Mammary epithelial cell (primary cell): ENCODE measurements at regions of chr3 and their contacts with region 1.

Region 1: DNA sequence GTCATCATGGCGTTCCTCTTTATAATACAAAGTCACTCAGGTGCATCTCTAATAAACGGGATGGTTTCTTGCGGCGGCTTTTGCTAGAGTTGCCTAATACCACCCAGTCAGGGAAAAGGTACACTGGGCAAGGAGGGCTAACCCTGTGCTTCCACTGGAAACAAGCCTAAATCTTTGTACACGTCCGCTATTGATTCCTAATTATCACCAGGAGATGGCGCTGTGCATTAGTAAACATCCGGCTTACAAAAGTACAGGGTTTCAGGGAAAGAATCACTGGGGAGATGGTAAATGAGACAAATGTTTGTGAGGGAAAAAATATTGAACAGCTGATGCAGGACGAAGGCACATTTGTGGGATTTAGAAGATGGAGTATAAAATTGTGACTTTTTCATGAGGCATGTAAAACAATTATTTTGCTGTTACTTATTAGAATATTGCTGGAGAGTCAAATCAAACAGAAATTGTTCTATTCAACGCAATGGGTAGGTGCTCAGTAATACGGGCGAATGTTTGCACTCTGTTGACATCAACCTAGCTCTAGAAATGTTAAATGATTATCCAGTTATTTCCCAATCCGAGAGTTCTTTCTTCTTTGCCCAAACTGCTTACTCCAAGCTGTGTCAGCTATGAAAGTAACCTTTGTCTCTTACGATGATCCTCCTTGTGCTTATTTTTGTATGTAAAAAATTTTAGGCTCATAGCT is 50.6 kb downstream of the GMNC start:
- DNase-seq: peak; percentile 40
- H3K4me3 ChIP-seq: peak overlapping the region; percentile 11 to 52 (median 35)
- H3K27ac ChIP-seq: no peak overlapping the region
- H3K4me1 ChIP-seq: peaks cover 15% of the 10 kb centered on the region
- H3K27me3 ChIP-seq: no peaks in the 10 kb centered on the region
- CTCF ChIP-seq: peak; percentile 74 to 75

Region 2: DNA sequence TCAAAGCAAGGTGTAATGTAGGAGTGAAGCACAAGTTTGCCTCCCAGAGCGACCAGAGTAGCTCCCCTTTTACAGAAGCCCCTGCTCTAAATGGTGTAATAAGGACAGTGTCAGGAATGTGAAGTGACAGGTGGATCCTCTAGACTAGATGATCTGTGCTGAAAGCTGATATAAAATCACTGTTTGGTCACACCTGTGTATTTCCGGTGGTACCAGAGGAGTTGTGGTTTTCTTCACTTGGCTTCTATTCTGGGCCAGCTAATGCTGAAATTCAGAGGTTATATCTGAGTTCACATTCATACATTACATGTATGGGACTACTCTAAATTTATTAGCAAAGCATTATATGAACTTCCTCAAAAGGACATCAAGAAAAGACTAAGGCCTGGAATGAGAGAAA is 180.6 kb before region 1 on chr3:
- CTCF ChIA-PET with region 1: no interaction called
- dilution Hi-C with region 1: no loop called
- in situ Hi-C with region 1: no loop called
- intact Hi-C with region 1: no loop called
- DNase-seq: no peak
- H3K4me3 ChIP-seq: no peak overlapping the region
- H3K27ac ChIP-seq: no peak overlapping the region
- H3K4me1 ChIP-seq: no peaks in the 10 kb centered on the region
- H3K27me3 ChIP-seq: no peaks in the 10 kb centered on the region
- CTCF ChIP-seq: no peak

Region 3: GRCh38 chr3:191051037-191051436 is 239.1 kb after region 1 on chr3:
- CTCF ChIA-PET with region 1: no interaction called
- dilution Hi-C with region 1: no loop called
- in situ Hi-C with region 1: no loop called
- intact Hi-C with region 1: loop called (anchors 1 kb)
- DNase-seq: peak; percentile 16
- H3K4me3 ChIP-seq: no peak overlapping the region
- H3K27ac ChIP-seq: no peak overlapping the region
- H3K4me1 ChIP-seq: no peaks in the 10 kb centered on the region
- H3K27me3 ChIP-seq: no peaks in the 10 kb centered on the region
- CTCF ChIP-seq: peak; percentile 33 to 39

Region 4: DNA sequence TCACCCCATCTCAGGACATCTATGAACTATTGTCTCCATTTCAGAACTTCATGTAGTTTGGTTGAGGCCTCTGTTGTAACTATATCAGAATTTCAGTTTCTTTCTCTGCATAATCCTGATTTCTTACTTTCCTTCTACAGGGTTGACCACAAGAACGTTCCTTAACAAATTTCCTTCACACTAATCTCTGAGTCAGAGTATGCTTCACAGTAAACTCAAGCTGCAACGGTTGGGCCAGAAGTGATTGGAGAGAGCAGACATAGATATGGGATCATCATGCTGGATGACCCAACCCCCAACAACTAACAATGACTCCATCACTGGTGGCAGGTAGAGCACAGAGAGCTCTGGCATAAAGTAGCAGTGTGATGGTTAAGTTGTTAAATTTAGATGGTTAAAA is 258.3 kb after region 1 on chr3:
- CTCF ChIA-PET with region 1: no interaction called
- dilution Hi-C with region 1: no loop called
- in situ Hi-C with region 1: no loop called
- intact Hi-C with region 1: no loop called
- DNase-seq: peak; percentile 92
- H3K4me3 ChIP-seq: no peak overlapping the region
- H3K27ac ChIP-seq: peak overlapping the region; percentile 45
- H3K4me1 ChIP-seq: peaks cover 53% of the 10 kb centered on the region
- H3K27me3 ChIP-seq: no peaks in the 10 kb centered on the region
- CTCF ChIP-seq: no peak